ENCODE measurements at regions of chr11 and their contacts with region 1.

Region 1: DNA sequence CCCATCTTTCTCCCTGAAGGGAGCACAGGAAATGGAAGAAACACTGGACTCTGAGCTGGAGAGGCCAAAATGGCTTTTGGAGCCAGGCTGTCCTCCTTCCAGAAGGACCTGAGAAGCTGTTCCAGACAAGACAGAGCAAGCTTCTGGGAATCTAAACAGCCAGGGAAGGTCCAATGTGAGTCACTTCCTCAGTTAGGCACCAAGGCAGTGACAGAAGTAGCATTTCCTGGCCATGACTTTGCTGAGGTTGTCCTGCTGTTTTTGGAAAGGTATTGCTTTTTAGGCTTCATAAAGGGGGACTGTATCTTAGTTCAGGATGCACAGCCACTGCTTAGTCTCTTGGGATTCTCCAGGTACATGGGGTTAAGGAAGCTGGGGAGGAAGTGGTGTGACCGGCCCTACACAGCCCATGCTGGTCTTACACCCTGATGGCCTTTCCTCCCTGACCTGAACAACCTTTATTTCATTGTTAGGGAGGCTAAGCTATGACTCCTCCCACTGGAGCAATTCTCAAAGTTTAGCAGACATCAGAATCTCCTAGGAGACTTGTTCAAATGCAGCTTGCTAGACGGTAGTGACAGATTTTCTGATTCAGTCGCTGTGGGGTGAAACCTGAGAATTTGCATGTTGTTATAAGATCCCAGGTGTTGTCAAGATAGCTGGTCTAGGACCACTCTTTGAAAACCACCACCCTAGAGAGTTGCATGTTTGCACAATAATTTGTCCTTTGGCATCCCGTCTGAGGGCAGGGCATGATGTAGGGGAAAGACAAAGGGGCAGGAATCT is 6.8 kb upstream of the INSC start:
- DNase-seq: no peak
- H3K4me3 ChIP-seq: no peak overlapping the region
- H3K27ac ChIP-seq: no peak overlapping the region
- H3K4me1 ChIP-seq: peaks cover 29% of the 10 kb centered on the region
- H3K27me3 ChIP-seq: no peaks in the 10 kb centered on the region
- CTCF ChIP-seq: no peak

Region 2: DNA sequence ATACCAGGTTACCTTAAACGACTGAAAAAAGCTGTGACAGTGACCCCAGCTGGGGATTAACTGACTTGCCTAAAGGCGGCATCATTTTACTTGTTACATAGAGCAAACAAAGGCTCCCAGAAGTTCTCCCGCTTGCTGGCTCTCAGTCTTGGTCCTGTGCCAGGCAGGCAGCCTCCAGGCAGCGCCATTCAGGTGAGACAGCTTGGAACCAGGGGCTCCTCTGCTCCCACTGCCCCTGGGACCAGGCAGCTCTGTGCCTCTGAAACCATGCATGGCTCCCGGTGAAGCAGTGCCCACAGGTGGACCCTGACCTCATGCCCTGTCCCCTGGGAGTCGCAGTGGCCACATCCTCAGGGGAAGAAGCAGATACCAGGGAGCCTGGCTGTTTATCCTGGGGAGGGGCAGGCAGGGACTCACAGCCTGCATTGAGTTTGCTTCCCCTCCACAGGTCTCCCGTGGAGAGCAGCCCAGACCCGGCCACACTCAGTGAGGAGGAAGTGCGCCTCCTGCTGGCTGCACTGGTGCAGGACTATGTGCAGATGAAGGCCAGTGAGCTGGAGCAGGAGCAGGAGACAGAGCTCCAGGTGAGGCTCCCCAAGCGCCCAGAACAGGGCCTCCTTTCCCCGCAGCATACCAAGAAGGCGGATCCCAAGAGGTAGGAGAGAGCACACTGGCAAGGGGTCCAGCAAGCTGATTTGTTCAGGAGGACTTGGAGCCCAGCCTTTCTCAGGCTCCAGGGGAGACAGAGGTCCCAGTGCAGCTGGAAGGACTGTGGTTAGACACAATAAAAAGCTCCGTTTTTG is 200.3 kb before region 1 on chr11:
- CTCF ChIA-PET with region 1: no interaction called
- POLR2A ChIA-PET with region 1: no interaction called
- intact Hi-C with region 1: no loop called
- DNase-seq: peak in 1 of 2 experiments; percentile 23
- H3K4me3 ChIP-seq: no peak overlapping the region; the same call in 1 of the 2 replicates
- H3K27ac ChIP-seq: no peak overlapping the region
- H3K4me1 ChIP-seq: 0 out of 2 replicates have a peak, but pooled peaks cover 5% of the 10 kb centered on the region
- H3K27me3 ChIP-seq: no peaks in the 10 kb centered on the region
- CTCF ChIP-seq: peak; percentile 78

Region 3: DNA sequence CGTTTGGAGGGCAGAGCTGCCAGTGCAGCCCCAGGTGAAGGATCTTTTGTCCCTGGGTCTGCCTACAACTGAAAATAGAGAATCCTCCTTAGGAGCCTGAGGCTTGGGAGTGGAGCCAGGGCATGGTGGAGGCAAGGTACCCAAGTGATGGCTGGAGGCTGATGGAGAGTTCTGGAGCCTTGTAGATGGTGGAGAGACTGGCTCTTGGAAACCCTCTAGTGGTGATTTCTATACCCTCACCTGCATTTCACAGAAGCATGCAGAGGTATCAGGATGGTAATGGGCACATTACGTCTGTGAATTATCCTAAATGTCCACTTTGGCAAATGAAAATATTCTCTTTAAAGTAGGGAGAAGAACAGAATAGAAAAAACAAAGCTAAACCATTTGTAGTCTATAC is 51.2 kb after region 1 on chr11:
- CTCF ChIA-PET with region 1: no interaction called
- POLR2A ChIA-PET with region 1: no interaction called
- intact Hi-C with region 1: loop called (anchors 2 kb)
- DNase-seq: no peak
- H3K4me3 ChIP-seq: no peak overlapping the region
- H3K27ac ChIP-seq: no peak overlapping the region
- H3K4me1 ChIP-seq: peaks cover 8% of the 10 kb centered on the region
- H3K27me3 ChIP-seq: no peaks in the 10 kb centered on the region
- CTCF ChIP-seq: peak; percentile 57

Region 4: DNA sequence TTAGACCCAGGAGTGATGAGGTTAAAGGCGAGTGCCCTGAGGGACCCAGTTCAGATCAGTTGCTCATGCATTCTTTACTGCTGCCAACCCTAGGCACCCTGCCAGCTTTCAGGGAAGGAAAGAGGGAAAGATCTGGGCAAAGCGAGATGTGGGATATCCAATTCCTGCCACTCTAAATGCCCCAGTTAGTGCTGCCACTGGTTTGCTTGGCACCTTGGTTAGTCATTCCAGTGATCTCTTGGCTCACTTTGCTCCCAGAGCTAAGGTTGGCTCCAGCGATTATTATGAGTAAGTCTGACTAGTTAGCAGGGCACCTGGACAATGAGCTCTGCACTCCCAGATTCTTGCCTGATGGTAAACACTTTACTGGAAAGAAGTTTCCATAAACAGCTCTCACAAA is 91.8 kb after region 1 on chr11:
- CTCF ChIA-PET with region 1: no interaction called
- POLR2A ChIA-PET with region 1: no interaction called
- intact Hi-C with region 1: no loop called
- DNase-seq: peak in 1 of 2 experiments; percentile 51
- H3K4me3 ChIP-seq: no peak overlapping the region
- H3K27ac ChIP-seq: no peak overlapping the region
- H3K4me1 ChIP-seq: peaks cover 7% of the 10 kb centered on the region; the same call in 1 of the 2 replicates
- H3K27me3 ChIP-seq: no peaks in the 10 kb centered on the region
- CTCF ChIP-seq: no peak

Measured in PC-9 (cell line).